Caco-2 (cell line): ENCODE measurements at regions of chr7 and their contacts with region 1.

Region 1: DNA sequence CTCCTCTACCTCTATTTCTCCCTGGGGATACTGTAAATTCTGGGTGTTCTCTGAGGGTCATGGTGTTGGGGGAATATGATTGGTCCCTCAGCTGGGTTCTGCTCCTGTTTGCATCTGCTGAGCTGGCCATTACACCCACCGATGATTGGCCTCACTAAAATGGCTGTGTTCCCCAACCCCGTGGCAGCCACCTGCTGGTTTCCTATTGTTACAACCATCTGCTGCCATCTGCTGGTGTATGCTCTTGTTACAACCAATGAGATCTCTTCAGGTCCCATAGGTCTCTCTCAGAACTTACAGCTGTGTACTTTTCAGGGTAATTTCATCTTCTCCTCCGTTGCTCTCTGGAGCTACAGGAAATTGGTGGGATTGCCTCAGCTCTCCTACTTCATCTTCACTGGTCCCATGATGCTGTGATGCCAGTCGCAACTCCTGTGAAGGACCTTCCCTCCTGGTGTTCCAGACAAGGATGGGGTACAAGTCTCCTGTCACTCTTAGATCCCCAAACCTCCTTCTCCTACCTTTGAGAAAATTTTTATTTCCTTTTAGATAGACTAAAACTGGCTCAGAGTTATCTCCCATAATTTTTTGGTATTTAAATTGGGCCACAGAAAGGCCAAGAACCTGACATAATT is 303.5 kb upstream of the SMIM30 start:
- DNase-seq: peak; percentile 83 to 84
- H3K4me3 ChIP-seq: no peak overlapping the region
- H3K4me3 Mint-ChIP-seq: no peak overlapping the region
- H3K27ac Mint-ChIP-seq: no peak overlapping the region
- H3K4me1 ChIP-seq: no peaks in the 10 kb centered on the region
- H3K4me1 Mint-ChIP-seq: no peaks in the 10 kb centered on the region
- H3K27me3 ChIP-seq: no peaks in the 10 kb centered on the region
- H3K27me3 Mint-ChIP-seq: no peaks in the 10 kb centered on the region
- CTCF ChIP-seq: peak; percentile 84 to 95

Region 2: DNA sequence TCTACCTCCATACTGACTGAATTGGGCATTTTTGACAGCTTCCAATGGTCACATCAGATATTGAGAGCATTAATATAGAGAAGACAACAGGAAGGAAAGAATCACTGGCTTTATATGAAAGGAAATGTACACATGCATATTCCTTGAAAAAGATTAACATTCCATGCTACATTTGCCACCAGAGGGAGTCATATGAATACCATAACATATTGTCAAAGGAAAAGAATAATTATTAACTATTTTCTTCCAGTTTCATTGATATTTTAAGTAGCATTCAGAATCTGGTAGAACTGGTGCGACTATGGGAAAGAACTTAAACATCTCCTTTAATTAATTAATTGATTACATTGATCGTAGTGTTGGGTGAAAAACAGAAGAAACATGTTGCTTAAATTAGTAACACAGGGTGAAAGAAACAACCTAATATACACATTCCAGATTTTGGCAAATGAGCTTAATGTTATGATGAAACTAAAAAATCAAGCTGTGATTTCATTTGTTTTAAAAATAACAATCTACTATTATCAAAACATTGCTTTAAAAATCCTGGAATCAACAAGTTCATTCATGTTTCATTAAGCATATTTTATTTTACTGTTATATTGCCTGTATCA is 406.7 kb before region 1 on chr7:
- CTCF ChIA-PET with region 1: interaction called, 3 read pairs
- POLR2A ChIA-PET with region 1: no interaction called
- intact Hi-C with region 1: loop called (anchors 1 kb)
- DNase-seq: peak in 1 of 2 experiments; percentile 26
- H3K4me3 ChIP-seq: no peak overlapping the region
- H3K4me3 Mint-ChIP-seq: no peak overlapping the region
- H3K27ac Mint-ChIP-seq: no peak overlapping the region
- H3K4me1 ChIP-seq: no peaks in the 10 kb centered on the region
- H3K4me1 Mint-ChIP-seq: no peaks in the 10 kb centered on the region
- H3K27me3 ChIP-seq: no peaks in the 10 kb centered on the region
- H3K27me3 Mint-ChIP-seq: peaks cover 3% of the 10 kb centered on the region
- CTCF ChIP-seq: peak; percentile 38 to 42

Region 3: GRCh38 chr7:113159746-113160339 is 262.0 kb before region 1 on chr7:
- CTCF ChIA-PET with region 1: interaction called, 15 read pairs
- POLR2A ChIA-PET with region 1: no interaction called
- intact Hi-C with region 1: loop called (anchors 1 kb)
- DNase-seq: peak; percentile 44 to 46
- H3K4me3 ChIP-seq: no peak overlapping the region
- H3K4me3 Mint-ChIP-seq: no peak overlapping the region
- H3K27ac Mint-ChIP-seq: no peak overlapping the region
- H3K4me1 ChIP-seq: no peaks in the 10 kb centered on the region
- H3K4me1 Mint-ChIP-seq: no peaks in the 10 kb centered on the region
- H3K27me3 ChIP-seq: no peaks in the 10 kb centered on the region
- H3K27me3 Mint-ChIP-seq: peaks cover 2% of the 10 kb centered on the region
- CTCF ChIP-seq: peak; percentile 76 to 80

Region 4: DNA sequence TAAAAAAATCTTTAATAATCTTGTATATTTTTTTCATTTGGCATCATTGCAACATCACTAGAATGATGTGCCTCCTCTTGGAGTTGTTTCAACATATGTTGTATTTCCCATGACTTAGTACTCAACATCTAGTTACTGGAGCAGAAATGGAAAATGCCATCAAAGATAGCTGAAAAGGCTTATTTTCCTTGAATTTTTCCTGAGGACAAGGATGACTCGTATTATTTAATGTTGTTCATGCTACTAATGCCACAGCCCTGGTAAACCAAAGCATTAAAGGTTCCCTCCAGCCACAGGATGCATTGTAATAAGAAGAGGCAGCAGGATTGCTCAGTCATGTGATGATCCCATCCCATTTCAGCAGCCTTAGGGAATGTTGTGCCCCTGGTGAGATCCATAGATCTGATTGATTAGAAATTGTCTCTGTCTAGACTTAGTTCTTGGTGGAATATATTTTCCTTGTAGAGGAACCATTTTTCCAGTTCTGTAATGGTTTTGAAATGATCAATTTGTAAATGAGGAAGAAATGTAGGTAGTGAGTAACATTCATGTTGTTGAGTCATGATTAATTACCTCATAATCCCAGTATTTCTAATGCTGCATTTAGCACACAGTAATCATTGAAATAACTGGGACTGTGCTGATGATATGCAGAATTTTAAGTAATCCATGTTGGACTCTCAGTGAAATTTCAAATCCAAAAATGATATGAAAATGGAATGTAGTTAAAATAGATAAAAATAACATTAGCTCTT is 212.2 kb before region 1 on chr7:
- CTCF ChIA-PET with region 1: no interaction called
- POLR2A ChIA-PET with region 1: no interaction called
- intact Hi-C with region 1: no loop called
- DNase-seq: no peak
- H3K4me3 ChIP-seq: no peak overlapping the region
- H3K4me3 Mint-ChIP-seq: no peak overlapping the region
- H3K27ac Mint-ChIP-seq: no peak overlapping the region
- H3K4me1 ChIP-seq: no peaks in the 10 kb centered on the region
- H3K4me1 Mint-ChIP-seq: no peaks in the 10 kb centered on the region
- H3K27me3 ChIP-seq: no peaks in the 10 kb centered on the region
- H3K27me3 Mint-ChIP-seq: no peaks in the 10 kb centered on the region
- CTCF ChIP-seq: no peak

Region 5: GRCh38 chr7:113289140-113289740 is 132.6 kb before region 1 on chr7:
- CTCF ChIA-PET with region 1: interaction called, 3 read pairs
- POLR2A ChIA-PET with region 1: no interaction called
- intact Hi-C with region 1: loop called (anchors 2 kb)
- DNase-seq: peak; percentile 33 to 45
- H3K4me3 ChIP-seq: no peak overlapping the region
- H3K4me3 Mint-ChIP-seq: no peak overlapping the region
- H3K27ac Mint-ChIP-seq: no peak overlapping the region
- H3K4me1 ChIP-seq: no peaks in the 10 kb centered on the region
- H3K4me1 Mint-ChIP-seq: no peaks in the 10 kb centered on the region
- H3K27me3 ChIP-seq: no peaks in the 10 kb centered on the region
- H3K27me3 Mint-ChIP-seq: peaks cover 3% of the 10 kb centered on the region
- CTCF ChIP-seq: peak; percentile 31 to 66

Region 6: DNA sequence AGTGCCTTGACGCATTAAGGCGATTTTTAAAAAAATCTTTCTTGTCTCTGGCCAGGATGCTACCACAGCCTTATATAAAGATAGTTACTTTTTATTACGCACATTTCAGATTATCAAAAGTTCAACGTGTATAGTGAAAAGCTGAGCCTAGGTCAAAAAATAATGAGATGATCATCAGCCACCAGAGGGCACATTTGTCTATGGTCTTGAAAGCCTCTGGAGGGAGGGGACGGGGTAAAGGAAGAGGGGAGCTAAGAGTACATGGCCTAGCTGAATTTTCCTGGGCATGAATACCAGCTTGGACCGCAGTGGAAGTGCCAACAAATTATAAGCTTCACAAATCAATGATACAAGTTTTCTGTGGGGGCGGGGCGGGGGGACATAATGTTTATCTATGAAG is 17.6 kb before region 1 on chr7:
- CTCF ChIA-PET with region 1: interaction called, 26 read pairs
- POLR2A ChIA-PET with region 1: no interaction called
- intact Hi-C with region 1: loop called (anchors 1 kb)
- DNase-seq: peak; percentile 31 to 39
- H3K4me3 ChIP-seq: no peak overlapping the region
- H3K4me3 Mint-ChIP-seq: no peak overlapping the region
- H3K27ac Mint-ChIP-seq: no peak overlapping the region
- H3K4me1 ChIP-seq: no peaks in the 10 kb centered on the region
- H3K4me1 Mint-ChIP-seq: no peaks in the 10 kb centered on the region
- H3K27me3 ChIP-seq: no peaks in the 10 kb centered on the region
- H3K27me3 Mint-ChIP-seq: no peaks in the 10 kb centered on the region
- CTCF ChIP-seq: peak in 1 of 2 experiments; percentile 30

Region 7: GRCh38 chr7:113710310-113711106 is 288.7 kb after region 1 on chr7:
- CTCF ChIA-PET with region 1: no interaction called
- POLR2A ChIA-PET with region 1: no interaction called
- intact Hi-C with region 1: no loop called
- DNase-seq: peak; percentile 58 to 76
- H3K4me3 ChIP-seq: no peak overlapping the region
- H3K4me3 Mint-ChIP-seq: no peak overlapping the region
- H3K27ac Mint-ChIP-seq: no peak overlapping the region
- H3K4me1 ChIP-seq: no peaks in the 10 kb centered on the region
- H3K4me1 Mint-ChIP-seq: no peaks in the 10 kb centered on the region
- H3K27me3 ChIP-seq: no peaks in the 10 kb centered on the region
- H3K27me3 Mint-ChIP-seq: peaks cover 3% of the 10 kb centered on the region
- CTCF ChIP-seq: peak; percentile 84 to 88